ENCODE measurements at regions of chr9 and their contacts with region 1.

Region 1: GRCh38 chr9:33924978-33925797 is 108.2 kb downstream of the UBE2R2 start:
- DNase-seq: peak; percentile 54
- ATAC-seq: peak; percentile 80
- H3K4me3 ChIP-seq: no peak overlapping the region
- H3K27ac ChIP-seq: no peak overlapping the region
- H3K4me1 ChIP-seq: no peaks in the 10 kb centered on the region
- H3K27me3 ChIP-seq: no peaks in the 10 kb centered on the region
- CTCF ChIP-seq: peak; percentile 65
- POLR2A ChIP-seq: no peak
- RAD21 ChIP-seq: peak; percentile 60

Region 2: DNA sequence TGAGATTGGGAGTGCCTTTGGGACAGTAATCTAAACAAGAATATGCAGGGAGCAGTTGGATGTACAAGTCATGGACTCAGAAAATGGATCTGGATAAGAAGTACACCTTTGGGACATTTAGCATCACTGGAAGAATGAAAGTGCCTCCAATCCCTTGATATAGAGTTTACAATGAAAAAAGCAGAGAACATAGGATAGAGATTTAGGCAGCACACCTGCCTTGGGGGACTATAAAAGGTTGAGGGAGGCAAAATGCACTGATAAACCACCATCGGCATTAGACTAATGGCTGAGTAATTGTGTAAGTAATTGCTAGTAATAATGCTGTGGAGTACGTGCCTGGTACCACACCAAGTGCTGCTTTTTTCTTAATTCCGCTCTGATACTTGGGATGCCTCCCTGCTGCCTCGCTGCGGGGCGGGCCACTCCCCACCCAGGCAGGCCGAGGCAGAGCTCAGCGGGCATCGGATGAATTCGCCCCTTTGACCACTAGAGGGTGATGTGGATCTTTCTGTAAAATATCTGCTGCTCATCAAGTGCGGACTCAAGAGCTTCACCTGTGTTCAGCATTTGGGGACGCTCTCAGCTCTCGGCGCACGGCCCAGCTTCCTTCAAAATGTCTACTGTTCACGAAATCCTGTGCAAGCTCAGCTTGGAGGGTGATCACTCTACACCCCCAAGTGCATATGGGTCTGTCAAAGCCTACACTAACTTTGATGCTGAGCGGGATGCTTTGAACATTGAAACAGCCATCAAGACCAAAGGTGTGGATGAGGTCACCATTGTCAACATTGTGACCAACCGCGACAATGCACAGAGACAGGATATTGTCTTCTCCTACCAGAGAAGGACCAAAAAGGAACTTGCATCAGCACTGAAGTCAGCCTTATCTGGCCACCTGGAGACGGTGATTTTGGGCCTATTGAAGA is 301.3 kb before region 1 on chr9:
- CTCF ChIA-PET with region 1: no interaction called
- POLR2A ChIA-PET with region 1: no interaction called
- dilution Hi-C with region 1: no loop called
- in situ Hi-C with region 1: no loop called
- intact Hi-C with region 1: loop called (anchors 10 kb)
- DNase-seq: peak; percentile 67
- ATAC-seq: peak; percentile 78
- H3K4me3 ChIP-seq: no peak overlapping the region
- H3K27ac ChIP-seq: no peak overlapping the region
- H3K4me1 ChIP-seq: peaks cover 8% of the 10 kb centered on the region
- H3K27me3 ChIP-seq: peaks cover 3% of the 10 kb centered on the region
- CTCF ChIP-seq: peak; percentile 90
- POLR2A ChIP-seq: no peak
- RAD21 ChIP-seq: peak; percentile 89

Region 3: GRCh38 chr9:33687779-33688178 is 237.4 kb before region 1 on chr9:
- CTCF ChIA-PET with region 1: no interaction called
- POLR2A ChIA-PET with region 1: no interaction called
- dilution Hi-C with region 1: no loop called
- in situ Hi-C with region 1: no loop called
- intact Hi-C with region 1: no loop called
- DNase-seq: peak; percentile 7
- ATAC-seq: no peak
- H3K4me3 ChIP-seq: no peak overlapping the region
- H3K27ac ChIP-seq: no peak overlapping the region
- H3K4me1 ChIP-seq: no peaks in the 10 kb centered on the region
- H3K27me3 ChIP-seq: peaks cover 10% of the 10 kb centered on the region
- CTCF ChIP-seq: no peak
- POLR2A ChIP-seq: no peak
- RAD21 ChIP-seq: no peak

Region 4: GRCh38 chr9:33737811-33738606 is 187.2 kb before region 1 on chr9:
- CTCF ChIA-PET with region 1: no interaction called
- POLR2A ChIA-PET with region 1: no interaction called
- dilution Hi-C with region 1: no loop called
- in situ Hi-C with region 1: no loop called
- intact Hi-C with region 1: loop called (anchors 1 kb)
- DNase-seq: peak; percentile 62
- ATAC-seq: peak; percentile 95
- H3K4me3 ChIP-seq: no peak overlapping the region
- H3K27ac ChIP-seq: no peak overlapping the region
- H3K4me1 ChIP-seq: peaks cover 2% of the 10 kb centered on the region; the same call in 1 of the 2 replicates
- H3K27me3 ChIP-seq: peaks cover 7% of the 10 kb centered on the region
- CTCF ChIP-seq: peak; percentile 78
- POLR2A ChIP-seq: no peak
- RAD21 ChIP-seq: peak; percentile 84

Region 5: DNA sequence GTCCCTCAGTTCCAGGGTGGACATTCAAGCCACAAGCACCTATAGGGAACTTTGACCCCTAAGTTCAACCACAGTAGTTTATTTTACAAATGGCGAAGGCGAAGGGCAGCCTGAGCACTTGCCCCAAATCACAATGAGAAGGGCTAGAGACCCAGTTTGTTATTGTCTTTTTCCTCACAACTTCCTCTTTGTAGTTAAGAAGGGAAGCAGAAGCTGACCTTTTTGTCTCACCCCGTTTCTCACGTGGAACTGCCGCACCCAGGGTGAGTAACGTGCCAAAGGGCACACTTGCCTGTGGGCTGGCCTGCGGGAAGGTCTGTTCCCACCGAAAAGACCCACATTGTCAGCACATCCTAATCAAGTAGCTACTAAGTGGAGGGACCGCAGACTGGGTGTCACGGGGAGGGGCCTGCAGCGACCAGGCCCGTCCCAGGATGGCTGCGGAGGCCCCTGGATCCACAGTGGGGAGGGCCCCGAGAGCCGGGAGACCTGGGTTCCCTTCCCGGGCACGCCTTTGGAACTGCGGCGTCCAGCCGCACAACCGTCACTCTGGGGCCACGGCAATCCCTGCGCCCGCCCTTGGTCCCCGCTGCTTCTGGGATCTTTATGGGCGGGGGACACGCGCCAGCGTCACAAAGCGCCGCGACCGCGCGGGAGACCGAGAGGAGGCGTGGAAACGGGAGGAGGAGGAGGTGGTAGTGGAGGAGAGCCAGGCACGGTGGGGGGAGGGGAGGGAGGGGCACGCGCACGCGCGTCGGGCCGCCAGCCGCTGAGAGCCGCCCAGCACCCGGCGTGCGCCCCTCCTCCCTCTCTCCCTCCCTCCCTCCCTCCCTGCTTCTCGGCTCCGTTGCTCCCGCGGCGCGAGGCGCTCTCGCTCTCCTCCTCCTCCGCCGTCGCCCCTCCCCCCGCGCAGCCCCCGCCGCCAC is 108.6 kb before region 1 on chr9 and contains the start of gene UBE2R2:
- CTCF ChIA-PET with region 1: interaction called, 3 read pairs
- POLR2A ChIA-PET with region 1: no interaction called
- dilution Hi-C with region 1: no loop called
- in situ Hi-C with region 1: no loop called
- intact Hi-C with region 1: loop called (anchors 5 kb)
- DNase-seq: peak; percentile 86
- ATAC-seq: peak; percentile 73
- H3K4me3 ChIP-seq: peak within 1 kb of the TSS; percentile 100
- H3K27ac ChIP-seq: peak within 1 kb of the TSS; percentile 98
- H3K4me1 ChIP-seq: peaks cover 15% of the 10 kb centered on the region
- H3K27me3 ChIP-seq: no peaks in the 10 kb centered on the region
- CTCF ChIP-seq: no peak
- POLR2A ChIP-seq: peak; percentile 81; the same call in 1 of the 2 replicates
- RAD21 ChIP-seq: no peak
- total RNA-seq, gene UBE2R2: 12.7 and 17.5 TPM in 2 replicates

Region 6: GRCh38 chr9:34025062-34025461 is 99.9 kb after region 1 on chr9:
- CTCF ChIA-PET with region 1: no interaction called
- POLR2A ChIA-PET with region 1: no interaction called
- dilution Hi-C with region 1: no loop called
- in situ Hi-C with region 1: no loop called
- intact Hi-C with region 1: loop called (anchors 1 kb)
- DNase-seq: peak; percentile 40
- ATAC-seq: no peak; the same call in 1 of the 2 replicates
- H3K4me3 ChIP-seq: no peak overlapping the region
- H3K27ac ChIP-seq: no peak overlapping the region
- H3K4me1 ChIP-seq: no peaks in the 10 kb centered on the region
- H3K27me3 ChIP-seq: no peaks in the 10 kb centered on the region
- CTCF ChIP-seq: no peak
- POLR2A ChIP-seq: no peak
- RAD21 ChIP-seq: no peak

Region 7: GRCh38 chr9:34376596-34377403 is 451.6 kb after region 1 on chr9 and contains the start of gene MYORG:
- CTCF ChIA-PET with region 1: no interaction called
- POLR2A ChIA-PET with region 1: no interaction called
- dilution Hi-C with region 1: no loop called
- in situ Hi-C with region 1: no loop called
- intact Hi-C with region 1: loop called (anchors 5 kb)
- DNase-seq: peak; percentile 65
- ATAC-seq: peak; percentile 84
- H3K4me3 ChIP-seq: peak within 1 kb of the TSS; percentile 54
- H3K27ac ChIP-seq: no peak within 1 kb of the TSS
- H3K4me1 ChIP-seq: peaks cover 8% of the 10 kb centered on the region
- H3K27me3 ChIP-seq: peaks cover 17% of the 10 kb centered on the region; the same call in 1 of the 2 replicates
- CTCF ChIP-seq: no peak
- POLR2A ChIP-seq: no peak
- RAD21 ChIP-seq: no peak
- total RNA-seq, gene MYORG: 0.36 and 0.56 TPM in 2 replicates

Region 8: DNA sequence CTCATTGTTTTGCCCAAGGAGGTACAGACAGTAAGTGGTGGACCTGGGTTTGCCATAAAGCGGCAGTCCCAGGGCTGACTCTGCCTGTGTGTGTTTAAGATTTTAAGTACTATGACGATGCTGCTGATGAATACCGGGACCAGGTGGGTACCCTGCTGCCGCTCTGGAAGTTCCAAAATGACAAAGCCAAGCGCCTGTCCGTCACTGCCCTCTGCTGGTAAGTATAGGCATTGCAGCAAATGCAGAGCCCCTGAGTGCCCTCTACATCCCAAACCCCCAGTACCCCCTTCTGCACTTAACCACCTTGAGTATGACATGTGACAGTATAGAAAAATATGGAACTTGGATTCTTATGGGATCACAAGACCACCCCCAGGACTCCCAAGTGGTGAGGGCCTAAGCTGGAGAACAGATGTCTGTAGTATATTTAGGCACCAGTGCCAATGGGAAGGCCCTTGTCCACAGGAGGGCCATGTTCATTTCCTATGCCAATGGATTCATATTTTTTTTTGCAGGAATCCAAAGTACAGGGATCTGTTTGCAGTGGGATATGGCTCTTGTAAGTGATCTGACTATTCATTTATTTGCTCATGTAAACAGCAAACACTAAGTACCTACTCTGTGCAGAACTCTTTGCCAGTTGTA is 575.6 kb after region 1 on chr9:
- CTCF ChIA-PET with region 1: no interaction called
- POLR2A ChIA-PET with region 1: no interaction called
- dilution Hi-C with region 1: no loop called
- in situ Hi-C with region 1: no loop called
- intact Hi-C with region 1: no loop called
- DNase-seq: peak; percentile 19
- ATAC-seq: peak; percentile 80
- H3K4me3 ChIP-seq: no peak overlapping the region
- H3K27ac ChIP-seq: no peak overlapping the region
- H3K4me1 ChIP-seq: no peaks in the 10 kb centered on the region; the same call in 1 of the 2 replicates
- H3K27me3 ChIP-seq: peaks cover 53% of the 10 kb centered on the region
- CTCF ChIP-seq: peak; percentile 89
- POLR2A ChIP-seq: no peak
- RAD21 ChIP-seq: peak; percentile 84

Measured in IMR-90 (cell line).